Activated naive CD4-positive, alpha-beta T cell treated with anti-CD3 and anti-CD28 coated beads for 36 hours (primary cell): ENCODE measurements at regions of chr2 and their contacts with region 1.

Region 1: DNA sequence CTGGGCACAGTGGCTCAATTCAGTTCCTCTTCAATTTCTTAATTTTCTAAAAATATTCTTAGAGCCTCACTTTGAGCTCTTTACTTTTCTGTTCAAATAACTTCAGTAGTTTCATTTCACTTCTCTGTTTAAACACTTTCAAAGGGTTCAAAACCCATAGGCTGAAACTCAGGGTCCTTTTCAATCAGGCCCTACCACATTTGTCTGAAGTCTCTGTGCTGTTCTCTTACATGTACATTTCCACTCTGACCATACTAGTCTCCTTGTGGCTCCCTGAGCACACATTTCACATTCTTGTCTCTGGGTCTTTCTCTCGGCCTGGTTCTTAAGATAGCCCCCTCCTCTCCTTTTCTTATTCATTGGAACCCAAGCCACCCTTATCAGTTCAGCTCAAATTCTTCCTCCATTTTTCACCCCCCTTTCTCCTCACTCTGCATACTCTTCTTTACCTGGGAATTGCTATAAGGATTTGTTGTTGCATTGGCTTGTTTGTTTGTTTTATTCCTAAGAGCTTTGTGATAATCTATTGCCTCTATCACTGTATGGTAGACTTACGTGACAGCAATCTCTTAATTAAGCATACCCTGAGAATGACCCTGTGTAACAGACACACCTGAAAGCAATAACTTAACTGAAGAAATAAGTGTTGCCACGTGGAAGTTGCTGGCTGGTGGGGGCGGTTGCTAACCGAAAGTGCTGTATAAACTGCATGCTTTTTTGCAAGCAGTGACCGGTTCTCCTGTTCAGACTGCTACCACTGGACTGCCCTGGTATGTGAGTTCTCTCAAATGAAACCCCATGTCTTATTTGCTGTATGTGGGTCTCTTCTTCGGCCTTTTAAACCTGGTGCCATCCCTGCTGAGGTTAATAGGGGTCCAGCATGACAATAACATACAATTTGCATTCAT is 27.7 kb upstream of the ACADL start:
- DNase-seq: no peak
- H3K4me3 Mint-ChIP-seq: no peak overlapping the region
- H3K27ac Mint-ChIP-seq: no peak overlapping the region
- H3K4me1 Mint-ChIP-seq: no peaks in the 10 kb centered on the region
- H3K27me3 Mint-ChIP-seq: peaks cover 2% of the 10 kb centered on the region

Region 2: DNA sequence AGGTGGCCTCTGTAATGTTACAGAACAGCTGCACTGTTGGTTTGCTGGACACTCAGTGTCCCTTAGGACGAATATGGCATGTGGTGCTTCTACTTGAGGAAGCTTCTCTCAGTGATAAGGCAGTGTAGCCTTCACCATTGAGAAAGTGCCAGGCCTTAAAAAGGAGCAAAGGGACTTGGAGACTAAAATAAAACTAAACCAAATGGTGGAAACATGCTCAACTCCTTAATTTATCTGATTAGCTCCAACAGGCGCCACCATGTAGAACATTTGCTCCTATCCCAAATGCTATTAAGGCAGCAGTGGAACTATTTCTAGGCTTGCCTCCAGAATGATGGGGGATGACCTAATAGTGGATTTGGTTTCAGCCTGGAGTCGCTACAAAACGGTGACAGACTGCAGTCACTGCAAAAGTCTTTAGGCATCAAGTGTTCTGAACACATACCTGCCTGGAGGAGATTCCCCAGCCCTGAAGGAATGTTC is 139.6 kb after region 1 on chr2:
- CTCF ChIA-PET with region 1: interaction called, 3 read pairs
- intact Hi-C with region 1: loop called (anchors 5 kb)
- DNase-seq: no peak
- H3K4me3 Mint-ChIP-seq: no peak overlapping the region
- H3K27ac Mint-ChIP-seq: no peak overlapping the region
- H3K4me1 Mint-ChIP-seq: no peaks in the 10 kb centered on the region
- H3K27me3 Mint-ChIP-seq: peaks cover 17% of the 10 kb centered on the region

Region 3: GRCh38 chr2:210440206-210440605 is 187.3 kb after region 1 on chr2:
- CTCF ChIA-PET with region 1: no interaction called
- intact Hi-C with region 1: loop called (anchors 1 kb)
- DNase-seq: no peak
- H3K4me3 Mint-ChIP-seq: no peak overlapping the region
- H3K27ac Mint-ChIP-seq: no peak overlapping the region
- H3K4me1 Mint-ChIP-seq: no peaks in the 10 kb centered on the region
- H3K27me3 Mint-ChIP-seq: no peaks in the 10 kb centered on the region